ENCODE measurements at regions of chr19 and their contacts with region 1.

Region 1: GRCh38 chr19:46030812-46031550 is 8.1 kb upstream of the PGLYRP1 start:
- DNase-seq: no peak
- H3K4me3 ChIP-seq: no peak overlapping the region
- H3K27ac ChIP-seq: no peak overlapping the region
- H3K4me1 ChIP-seq: no peaks in the 10 kb centered on the region
- H3K27me3 ChIP-seq: no peaks in the 10 kb centered on the region
- CTCF ChIP-seq: no peak

Region 2: GRCh38 chr19:46254776-46255175 is 223.8 kb after region 1 on chr19:
- intact Hi-C with region 1: no loop called
- DNase-seq: no peak
- H3K4me3 ChIP-seq: no peak overlapping the region
- H3K27ac ChIP-seq: no peak overlapping the region
- H3K4me1 ChIP-seq: no peaks in the 10 kb centered on the region
- H3K27me3 ChIP-seq: no peaks in the 10 kb centered on the region
- CTCF ChIP-seq: no peak

Region 3: GRCh38 chr19:46265217-46265828 is 234.3 kb after region 1 on chr19:
- intact Hi-C with region 1: loop called (anchors 1 kb)
- DNase-seq: peak in 1 of 2 donors; percentile 76
- H3K4me3 ChIP-seq: no peak overlapping the region
- H3K27ac ChIP-seq: no peak overlapping the region
- H3K4me1 ChIP-seq: no peaks in the 10 kb centered on the region
- H3K27me3 ChIP-seq: no peaks in the 10 kb centered on the region
- CTCF ChIP-seq: peak; percentile 84 to 90 (median 88)

Measured in ascending aorta (tissue), 2 donors.